Endothelial cell of umbilical vein (primary cell): ENCODE measurements at regions of chr12 and their contacts with region 1.

Region 1: GRCh38 chr12:121712461-121713256 is at the start of gene TMEM120B:
- DNase-seq: peak; percentile 76
- H3K4me3 ChIP-seq: peak within 1 kb of the TSS; percentile 61 to 95 (median 91)
- H3K27ac ChIP-seq: peak within 1 kb of the TSS; percentile 75
- H3K4me1 ChIP-seq: peaks cover 18% of the 10 kb centered on the region
- H3K27me3 ChIP-seq: no peaks in the 10 kb centered on the region
- CTCF ChIP-seq: peak in 1 of 2 donors; percentile 15
- POLR2A ChIP-seq: peak; percentile 94
- total RNA-seq, gene TMEM120B: 12.8 and 15.9 TPM in 2 replicates

Region 2: DNA sequence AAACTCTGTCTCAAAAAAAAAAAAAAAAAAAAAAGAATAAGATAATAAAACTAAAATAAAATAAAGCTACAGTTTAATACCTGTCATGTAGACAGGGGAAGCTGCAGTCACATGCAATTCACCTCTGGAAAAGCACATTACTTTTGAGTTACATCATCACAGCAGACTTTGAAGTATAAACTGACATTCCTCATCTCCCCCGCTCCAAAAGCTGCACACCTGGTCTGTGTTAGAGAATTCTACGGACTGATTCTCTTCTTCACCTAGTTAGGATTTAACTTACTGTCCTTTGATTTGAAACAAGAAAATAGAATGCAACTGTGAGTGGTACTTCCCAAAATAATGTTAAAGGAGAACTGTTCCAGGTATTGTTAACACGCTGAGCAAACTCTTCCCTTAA is 833.6 kb before region 1 on chr12:
- CTCF ChIA-PET with region 1: no interaction called
- POLR2A ChIA-PET with region 1: no interaction called
- dilution Hi-C with region 1: no loop called
- intact Hi-C with region 1: no loop called
- DNase-seq: no peak
- H3K4me3 ChIP-seq: no peak overlapping the region
- H3K27ac ChIP-seq: no peak overlapping the region
- H3K4me1 ChIP-seq: no peaks in the 10 kb centered on the region
- H3K27me3 ChIP-seq: no peaks in the 10 kb centered on the region
- CTCF ChIP-seq: no peak
- POLR2A ChIP-seq: no peak

Region 3: GRCh38 chr12:121688966-121689365 is 23.7 kb before region 1 on chr12:
- CTCF ChIA-PET with region 1: interaction called, 5 read pairs
- POLR2A ChIA-PET with region 1: no interaction called
- dilution Hi-C with region 1: no loop called
- intact Hi-C with region 1: loop called (anchors 2 kb)
- DNase-seq: no peak
- H3K4me3 ChIP-seq: no peak overlapping the region
- H3K27ac ChIP-seq: no peak overlapping the region
- H3K4me1 ChIP-seq: no peaks in the 10 kb centered on the region
- H3K27me3 ChIP-seq: no peaks in the 10 kb centered on the region
- CTCF ChIP-seq: no peak
- POLR2A ChIP-seq: no peak

Region 4: GRCh38 chr12:121748571-121749253 is 36.1 kb after region 1 on chr12:
- CTCF ChIA-PET with region 1: interaction called, 6 read pairs
- POLR2A ChIA-PET with region 1: no interaction called
- dilution Hi-C with region 1: no loop called
- intact Hi-C with region 1: loop called (anchors 1 kb)
- DNase-seq: peak; percentile 95
- H3K4me3 ChIP-seq: no peak overlapping the region
- H3K27ac ChIP-seq: peak overlapping the region; percentile 86
- H3K4me1 ChIP-seq: peaks cover 12% of the 10 kb centered on the region
- H3K27me3 ChIP-seq: no peaks in the 10 kb centered on the region
- CTCF ChIP-seq: no peak
- POLR2A ChIP-seq: no peak

Region 5: GRCh38 chr12:122159882-122160281 is 447.2 kb after region 1 on chr12:
- CTCF ChIA-PET with region 1: no interaction called
- POLR2A ChIA-PET with region 1: no interaction called
- dilution Hi-C with region 1: no loop called
- intact Hi-C with region 1: no loop called
- DNase-seq: no peak
- H3K4me3 ChIP-seq: no peak overlapping the region
- H3K27ac ChIP-seq: no peak overlapping the region
- H3K4me1 ChIP-seq: no peaks in the 10 kb centered on the region
- H3K27me3 ChIP-seq: no peaks in the 10 kb centered on the region
- CTCF ChIP-seq: peak in 1 of 2 donors; percentile 5
- POLR2A ChIP-seq: no peak